A673 (cell line): ENCODE measurements at regions of chrX and their contacts with region 1.

Region 1: DNA sequence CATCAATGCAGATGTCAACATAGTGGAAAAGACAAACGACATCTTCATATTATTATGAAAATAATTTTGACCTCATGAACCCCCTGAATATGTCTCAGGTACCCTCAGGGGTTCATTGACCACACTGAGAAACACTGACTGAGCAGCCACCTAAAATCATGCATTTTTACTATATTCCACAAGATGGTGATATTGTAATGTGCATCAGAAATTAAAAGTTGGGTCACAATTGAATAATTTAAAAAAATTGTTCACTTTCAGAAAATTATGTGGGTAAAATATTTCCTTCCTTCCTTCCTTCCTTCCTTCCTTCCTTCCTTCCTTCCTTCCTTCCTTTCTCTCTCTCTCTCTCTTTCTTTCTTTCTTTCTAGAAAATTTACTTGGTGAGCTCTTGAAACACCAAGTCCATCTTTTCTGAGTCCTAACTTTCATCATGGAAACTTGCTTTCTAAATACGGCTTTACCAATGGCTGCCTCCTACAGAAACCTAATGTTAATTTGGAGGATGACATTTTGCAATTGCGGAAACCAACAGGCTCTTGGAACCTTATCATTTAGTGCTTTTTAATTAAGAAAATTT is 103.6 kb downstream of the RTL3 start:
- DNase-seq: peak; percentile 86
- H3K4me3 ChIP-seq: no peak overlapping the region
- H3K27ac ChIP-seq: peak overlapping the region; percentile 93
- H3K4me1 ChIP-seq: peaks cover 9% of the 10 kb centered on the region
- H3K27me3 ChIP-seq: no peaks in the 10 kb centered on the region
- CTCF ChIP-seq: peak; percentile 60

Region 2: DNA sequence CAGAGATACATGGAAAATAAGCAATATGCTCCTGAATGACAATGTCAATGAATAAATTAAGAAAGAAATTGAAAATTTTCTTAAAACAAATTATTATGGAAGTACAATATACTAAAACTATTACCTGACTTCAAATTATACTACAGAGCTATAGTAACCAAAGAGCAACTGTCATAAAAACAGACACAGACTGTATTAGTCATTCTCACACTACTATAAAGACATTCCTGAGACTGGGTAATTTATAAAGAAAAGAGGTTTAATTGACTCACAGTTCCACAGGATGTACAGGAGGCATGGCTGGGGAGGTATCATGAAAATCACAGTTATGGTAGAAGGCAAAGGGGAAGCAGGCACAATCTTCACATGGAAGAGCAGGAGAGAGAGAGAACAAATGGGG is 168.1 kb before region 1 on chrX:
- CTCF ChIA-PET with region 1: no interaction called
- POLR2A ChIA-PET with region 1: no interaction called
- intact Hi-C with region 1: no loop called
- DNase-seq: no peak
- H3K4me3 ChIP-seq: no peak overlapping the region
- H3K27ac ChIP-seq: no peak overlapping the region
- H3K4me1 ChIP-seq: no peaks in the 10 kb centered on the region
- H3K27me3 ChIP-seq: no peaks in the 10 kb centered on the region
- CTCF ChIP-seq: no peak

Region 3: DNA sequence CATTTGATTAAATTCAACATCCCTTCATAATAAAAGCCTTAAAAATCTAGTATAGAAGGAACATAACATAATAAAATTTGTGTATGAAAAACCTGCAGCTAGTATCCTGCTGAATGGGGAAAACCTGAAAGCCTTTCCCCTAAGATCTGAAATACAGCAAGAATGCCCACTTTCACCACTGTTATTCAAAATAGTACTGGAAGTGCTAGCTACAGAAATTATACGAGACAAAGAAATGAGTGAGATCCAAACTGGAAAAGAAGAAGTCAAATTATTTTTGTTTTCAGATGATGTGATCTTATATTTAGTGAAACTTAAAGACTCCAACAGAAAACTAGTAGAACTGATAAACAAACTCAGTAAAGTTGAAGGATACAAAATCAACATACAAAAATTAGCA is 49.2 kb before region 1 on chrX:
- CTCF ChIA-PET with region 1: no interaction called
- POLR2A ChIA-PET with region 1: no interaction called
- intact Hi-C with region 1: no loop called
- DNase-seq: no peak
- H3K4me3 ChIP-seq: no peak overlapping the region
- H3K27ac ChIP-seq: no peak overlapping the region
- H3K4me1 ChIP-seq: no peaks in the 10 kb centered on the region
- H3K27me3 ChIP-seq: no peaks in the 10 kb centered on the region
- CTCF ChIP-seq: no peak

Region 4: GRCh38 chrX:78687586-78687985 is 132.1 kb after region 1 on chrX:
- CTCF ChIA-PET with region 1: no interaction called
- POLR2A ChIA-PET with region 1: no interaction called
- intact Hi-C with region 1: no loop called
- DNase-seq: no peak
- H3K4me3 ChIP-seq: no peak overlapping the region
- H3K27ac ChIP-seq: no peak overlapping the region
- H3K4me1 ChIP-seq: no peaks in the 10 kb centered on the region
- H3K27me3 ChIP-seq: no peaks in the 10 kb centered on the region
- CTCF ChIP-seq: no peak

Region 5: DNA sequence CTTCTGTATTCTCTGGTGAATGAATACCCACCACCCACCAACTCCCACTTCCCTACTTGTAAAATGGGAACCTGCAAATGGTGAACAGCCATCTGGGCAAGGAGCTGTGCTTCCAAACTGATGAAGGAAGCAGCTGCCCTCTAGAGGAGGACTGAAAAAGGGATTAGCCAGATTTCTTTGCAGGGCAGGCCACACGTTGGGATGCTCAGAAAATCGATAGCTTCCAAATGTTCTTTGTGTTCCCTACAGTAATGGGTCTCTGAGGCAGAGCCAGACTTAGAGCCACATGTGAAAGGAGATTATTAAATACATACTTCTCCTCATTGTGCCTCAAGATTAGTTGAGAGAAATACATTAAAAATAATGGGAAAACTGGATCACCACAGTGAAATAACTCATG is 152.8 kb after region 1 on chrX:
- CTCF ChIA-PET with region 1: no interaction called
- POLR2A ChIA-PET with region 1: no interaction called
- intact Hi-C with region 1: loop called (anchors 5 kb)
- DNase-seq: peak; percentile 57
- H3K4me3 ChIP-seq: no peak overlapping the region
- H3K27ac ChIP-seq: no peak overlapping the region
- H3K4me1 ChIP-seq: peaks cover 4% of the 10 kb centered on the region
- H3K27me3 ChIP-seq: no peaks in the 10 kb centered on the region
- CTCF ChIP-seq: peak; percentile 58

Region 6: GRCh38 chrX:78725287-78725686 is 169.8 kb after region 1 on chrX:
- CTCF ChIA-PET with region 1: no interaction called
- POLR2A ChIA-PET with region 1: no interaction called
- intact Hi-C with region 1: no loop called
- DNase-seq: peak; percentile 35
- H3K4me3 ChIP-seq: no peak overlapping the region
- H3K27ac ChIP-seq: no peak overlapping the region
- H3K4me1 ChIP-seq: no peaks in the 10 kb centered on the region
- H3K27me3 ChIP-seq: no peaks in the 10 kb centered on the region
- CTCF ChIP-seq: no peak

Region 7: DNA sequence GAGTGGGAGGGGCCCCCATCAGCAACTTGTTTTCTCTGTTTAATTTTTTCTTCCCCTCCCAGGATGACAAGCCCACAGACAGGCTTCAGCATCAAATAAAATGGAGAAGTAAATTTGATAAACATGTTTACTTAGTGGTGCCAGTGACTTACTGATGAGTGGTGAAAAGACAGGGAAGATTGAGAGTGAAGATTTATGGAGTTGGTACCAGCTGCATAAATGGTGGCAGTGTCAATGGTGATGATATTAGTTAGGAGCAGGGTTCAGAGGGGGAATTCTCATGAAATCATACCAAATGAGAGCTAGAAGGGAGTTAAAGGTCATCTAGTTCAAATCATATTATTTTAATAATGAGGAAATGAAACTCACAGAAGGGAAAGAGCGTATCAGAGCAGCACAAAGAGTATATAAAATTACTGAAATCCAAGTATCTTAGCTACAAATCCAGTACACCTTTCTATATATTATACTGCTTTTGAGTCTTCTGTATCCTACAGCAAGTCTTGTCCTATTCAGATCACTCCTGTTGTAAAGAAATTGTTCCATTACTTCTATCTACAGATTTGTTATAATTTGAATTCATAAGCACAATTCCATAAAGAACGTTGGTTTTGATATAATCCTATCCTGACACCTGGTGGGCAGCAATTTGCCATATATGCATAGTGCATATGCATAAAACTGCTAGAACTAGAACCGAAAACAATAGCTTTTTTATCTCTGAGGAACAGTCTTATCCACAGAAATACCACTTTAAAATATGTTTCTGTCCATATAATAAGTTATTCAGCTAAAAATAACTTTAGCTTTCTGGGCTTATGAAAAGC is 394.7 kb after region 1 on chrX:
- CTCF ChIA-PET with region 1: no interaction called
- POLR2A ChIA-PET with region 1: no interaction called
- intact Hi-C with region 1: loop called (anchors 2 kb)
- DNase-seq: peak; percentile 24
- H3K4me3 ChIP-seq: no peak overlapping the region
- H3K27ac ChIP-seq: peak overlapping the region; percentile 6
- H3K4me1 ChIP-seq: no peaks in the 10 kb centered on the region
- H3K27me3 ChIP-seq: no peaks in the 10 kb centered on the region
- CTCF ChIP-seq: peak; percentile 27; the same call in 1 of the 2 replicates

Region 8: DNA sequence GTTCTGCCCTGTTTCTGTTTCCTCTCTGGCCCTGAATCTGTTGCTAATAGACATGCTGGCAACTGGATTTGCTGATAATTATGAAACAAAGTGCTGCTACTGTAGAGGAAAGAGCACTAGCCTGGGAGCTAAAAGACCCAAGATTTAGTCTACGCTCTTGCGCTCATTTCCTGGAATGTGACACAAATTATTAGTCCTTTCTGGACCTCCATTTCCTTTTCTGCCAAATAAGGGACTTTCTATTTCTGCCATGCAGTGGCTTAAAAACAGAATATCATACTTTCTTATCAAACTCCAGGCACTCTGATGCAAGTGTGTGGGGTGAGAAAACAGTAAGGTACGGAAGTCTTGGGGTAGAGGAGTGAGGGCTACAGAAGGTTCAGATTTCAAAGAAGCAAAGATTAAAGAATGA is 540.7 kb after region 1 on chrX:
- CTCF ChIA-PET with region 1: interaction called, 3 read pairs
- POLR2A ChIA-PET with region 1: interaction called, 3 read pairs
- intact Hi-C with region 1: loop called (anchors 1 kb)
- DNase-seq: peak; percentile 84
- H3K4me3 ChIP-seq: peak overlapping the region; percentile 6
- H3K27ac ChIP-seq: peak overlapping the region; percentile 100
- H3K4me1 ChIP-seq: peaks cover 51% of the 10 kb centered on the region
- H3K27me3 ChIP-seq: no peaks in the 10 kb centered on the region
- CTCF ChIP-seq: no peak

Region 9: DNA sequence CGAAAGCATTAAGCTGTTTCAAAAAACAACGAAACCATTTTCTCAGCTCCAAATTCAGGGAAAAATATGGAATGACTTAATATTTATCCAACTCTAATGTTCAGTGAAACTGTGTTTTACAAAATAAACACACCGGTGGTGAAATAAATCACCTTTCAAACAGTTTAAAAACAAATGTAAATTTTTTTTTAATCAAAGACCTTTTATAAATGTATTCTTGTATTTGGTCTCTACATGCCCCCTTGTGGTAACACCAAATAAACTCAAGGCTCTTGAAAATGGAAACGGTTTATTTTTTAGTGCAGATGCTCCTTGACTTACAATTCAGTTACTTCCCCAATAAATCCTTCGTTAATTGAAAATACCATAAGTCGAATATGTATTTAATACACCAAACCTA is 857.5 kb after region 1 on chrX:
- CTCF ChIA-PET with region 1: no interaction called
- POLR2A ChIA-PET with region 1: no interaction called
- intact Hi-C with region 1: loop called (anchors 2 kb)
- DNase-seq: peak; percentile 73
- H3K4me3 ChIP-seq: peak overlapping the region; percentile 29
- H3K27ac ChIP-seq: peak overlapping the region; percentile 64
- H3K4me1 ChIP-seq: peaks cover 40% of the 10 kb centered on the region
- H3K27me3 ChIP-seq: no peaks in the 10 kb centered on the region
- CTCF ChIP-seq: peak; percentile 65